ENCODE measurements at regions of chr5 and their contacts with region 1.

Region 1: DNA sequence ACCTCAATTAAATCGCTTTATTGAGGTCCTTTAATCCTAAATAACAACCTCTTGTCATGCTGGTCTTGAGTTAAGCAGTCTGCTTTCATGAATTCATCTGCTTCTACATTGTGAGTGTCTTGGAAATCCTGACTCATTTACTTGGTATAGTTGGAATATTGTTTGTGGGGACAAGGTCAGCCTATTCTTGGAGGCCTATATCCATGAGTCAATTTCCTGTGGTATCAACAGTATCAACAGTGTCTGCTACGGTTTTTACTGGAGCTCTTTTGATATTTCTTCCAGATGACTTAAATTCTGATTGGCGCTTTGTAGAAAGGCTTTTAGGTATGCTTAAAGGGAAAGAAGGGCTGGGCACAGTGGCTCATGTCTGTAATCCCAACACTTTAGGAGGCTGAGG is 71.2 kb upstream of the PARP8 start:
- DNase-seq: no peak
- H3K4me3 Mint-ChIP-seq: no peak overlapping the region
- H3K27ac Mint-ChIP-seq: no peak overlapping the region
- H3K4me1 Mint-ChIP-seq: peaks cover 55% of the 10 kb centered on the region
- H3K27me3 Mint-ChIP-seq: no peaks in the 10 kb centered on the region

Region 2: DNA sequence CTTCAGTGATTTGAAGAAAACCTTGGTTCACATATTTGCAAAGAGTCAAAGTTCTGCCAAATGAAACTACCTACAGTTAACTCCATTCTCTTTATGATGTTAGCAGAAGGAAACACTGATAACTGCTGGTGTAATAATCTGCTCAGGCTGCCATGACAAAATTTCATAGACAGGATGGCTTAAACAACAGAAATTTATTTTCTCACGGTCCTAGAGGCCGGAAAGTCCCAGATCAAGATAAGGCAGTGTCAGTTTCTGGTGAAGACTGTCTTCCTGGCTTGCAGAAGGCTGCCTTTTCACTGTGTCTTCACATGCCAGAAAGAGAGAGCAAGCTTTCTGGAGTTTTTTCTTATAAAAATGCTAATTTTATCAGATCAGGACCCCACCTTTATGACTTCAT is 31.1 kb before region 1 on chr5:
- intact Hi-C with region 1: loop called (anchors 2 kb)
- DNase-seq: peak; percentile 39
- H3K4me3 Mint-ChIP-seq: peak overlapping the region; percentile 23
- H3K27ac Mint-ChIP-seq: peak overlapping the region; percentile 31
- H3K4me1 Mint-ChIP-seq: peaks cover 43% of the 10 kb centered on the region
- H3K27me3 Mint-ChIP-seq: peaks cover 2% of the 10 kb centered on the region

Region 3: GRCh38 chr5:51104556-51104955 is 509.4 kb after region 1 on chr5:
- intact Hi-C with region 1: no loop called
- DNase-seq: no peak
- H3K4me3 Mint-ChIP-seq: no peak overlapping the region
- H3K27ac Mint-ChIP-seq: no peak overlapping the region
- H3K4me1 Mint-ChIP-seq: no peaks in the 10 kb centered on the region
- H3K27me3 Mint-ChIP-seq: no peaks in the 10 kb centered on the region

Measured in activated T-helper 1 cell treated with anti-CD3 and anti-CD28 coated beads, Interleukin-12 subunit alpha, Interleukin-12 subunit beta, Interleukin-2, Interleukin-4 antibody, amounts not matched to agents 30 ng/mL and 10 ng/mL and 1 ng/mL, durations not matched to agents 14 hours and 24 hours and 36 hours (primary cell).